PC-9 (cell line): ENCODE measurements at regions of chr19 and their contacts with region 1.

Region 1: DNA sequence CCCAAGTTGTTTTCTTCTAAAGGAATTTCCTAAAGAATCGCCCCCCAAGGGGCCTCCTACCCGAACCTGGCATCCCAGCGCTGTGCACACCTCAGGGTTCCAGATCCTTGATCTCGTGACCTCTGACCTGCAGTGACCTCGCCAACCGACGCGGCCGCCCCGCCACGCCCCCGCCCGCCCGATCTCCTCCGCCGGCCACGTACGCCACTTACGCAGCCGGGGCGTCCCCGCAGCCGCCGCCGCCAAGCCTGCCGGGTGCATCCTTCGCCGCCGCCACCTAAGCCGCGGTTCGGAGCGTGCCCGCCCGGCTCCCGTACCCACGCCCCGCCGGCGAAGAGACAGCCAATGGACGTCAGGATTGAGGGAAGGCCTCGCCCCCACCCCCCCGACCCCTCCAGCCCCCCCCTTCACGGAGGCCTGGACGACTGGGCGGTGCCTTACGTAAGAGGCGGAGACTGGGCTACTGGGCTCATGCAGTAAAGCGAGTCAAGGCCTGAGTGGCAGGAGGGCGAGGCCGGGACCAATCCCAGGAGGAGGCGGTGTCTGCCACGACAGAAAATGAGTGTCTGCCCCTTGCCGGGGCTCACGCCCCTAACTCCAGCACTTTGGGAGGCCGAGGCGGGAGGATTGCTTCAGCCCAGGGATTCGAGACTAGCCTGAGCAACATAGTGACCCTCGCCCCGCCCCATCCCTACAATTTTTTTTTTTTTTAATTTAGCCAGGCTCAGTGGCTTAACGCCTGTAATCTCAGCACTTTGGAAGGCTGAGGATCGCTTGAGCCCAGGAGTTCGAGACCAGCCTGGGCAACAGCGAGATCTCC is at the start of gene YIF1B:
- DNase-seq: peak; percentile 94 to 96
- H3K4me3 ChIP-seq: peak within 1 kb of the TSS; percentile 60
- H3K27ac ChIP-seq: peak within 1 kb of the TSS; percentile 67
- H3K4me1 ChIP-seq: peaks cover 21% of the 10 kb centered on the region; the same call in 1 of the 2 replicates
- H3K27me3 ChIP-seq: peaks cover 16% of the 10 kb centered on the region
- CTCF ChIP-seq: no peak
- total RNA-seq, gene YIF1B: 33.6 and 39.8 TPM in 2 replicates

Region 2: DNA sequence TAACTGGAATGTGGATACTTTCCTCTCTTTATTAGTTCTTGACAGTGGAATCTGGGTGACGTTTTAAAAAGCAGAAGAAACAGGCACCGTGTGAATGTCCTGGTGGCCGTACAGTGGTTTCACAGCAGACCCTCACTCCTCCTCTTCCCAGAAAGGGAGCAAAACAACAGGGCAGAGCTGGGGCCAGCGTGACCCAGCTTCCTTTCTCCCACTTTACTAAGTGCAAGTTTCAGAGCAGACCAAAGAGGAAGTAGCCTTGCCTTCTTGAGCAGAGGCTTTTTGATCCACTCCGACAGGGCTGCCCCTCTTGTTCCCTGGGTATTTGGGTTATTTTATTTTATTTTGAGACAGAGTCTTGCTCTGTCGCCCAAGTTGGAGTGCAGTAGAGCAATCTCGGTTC is 31.4 kb before region 1 on chr19:
- CTCF ChIA-PET with region 1: no interaction called
- POLR2A ChIA-PET with region 1: no interaction called
- intact Hi-C with region 1: no loop called
- DNase-seq: no peak
- H3K4me3 ChIP-seq: no peak overlapping the region
- H3K27ac ChIP-seq: no peak overlapping the region
- H3K4me1 ChIP-seq: peaks cover 22% of the 10 kb centered on the region
- H3K27me3 ChIP-seq: no peaks in the 10 kb centered on the region
- CTCF ChIP-seq: no peak

Region 3: GRCh38 chr19:38304866-38305429 is 10.9 kb before region 1 on chr19:
- CTCF ChIA-PET with region 1: no interaction called
- POLR2A ChIA-PET with region 1: no interaction called
- intact Hi-C with region 1: loop called (anchors 1 kb)
- DNase-seq: peak; percentile 95 to 98
- H3K4me3 ChIP-seq: peak overlapping the region; percentile 72
- H3K27ac ChIP-seq: peak overlapping the region; percentile 94
- H3K4me1 ChIP-seq: peaks cover 33% of the 10 kb centered on the region
- H3K27me3 ChIP-seq: no peaks in the 10 kb centered on the region
- CTCF ChIP-seq: no peak

Region 4: DNA sequence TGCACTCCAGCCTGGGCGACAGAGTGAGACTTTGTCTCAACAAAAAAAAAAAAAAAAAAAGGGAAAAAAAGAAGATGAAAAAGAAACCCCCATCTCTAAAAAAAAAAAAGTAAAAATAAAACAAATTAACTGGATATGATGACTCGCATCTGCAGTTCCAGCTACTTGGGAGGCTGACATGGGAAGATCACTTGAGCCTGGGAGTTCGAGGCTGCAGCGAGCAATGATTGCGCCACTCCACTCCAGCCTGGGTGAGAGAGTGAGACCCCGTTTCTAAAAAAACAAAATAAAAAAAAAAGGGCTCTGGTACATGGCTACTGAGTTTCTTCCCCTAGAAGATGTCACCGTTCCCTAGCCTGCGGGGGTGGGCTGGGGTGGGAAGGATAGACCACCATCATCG is 17.4 kb after region 1 on chr19:
- CTCF ChIA-PET with region 1: no interaction called
- POLR2A ChIA-PET with region 1: no interaction called
- intact Hi-C with region 1: no loop called
- DNase-seq: no peak
- H3K4me3 ChIP-seq: no peak overlapping the region
- H3K27ac ChIP-seq: no peak overlapping the region
- H3K4me1 ChIP-seq: peaks cover 5% of the 10 kb centered on the region
- H3K27me3 ChIP-seq: no peaks in the 10 kb centered on the region
- CTCF ChIP-seq: no peak